SK-N-SH (cell line): ENCODE measurements at regions of chr17 and their contacts with region 1.

Region 1: GRCh38 chr17:67491009-67491680 is 114.1 kb downstream of the PITPNC1 start:
- DNase-seq: peak; percentile 89
- H3K4me3 ChIP-seq: peak overlapping the region; percentile 35 to 44
- H3K27ac ChIP-seq: peak overlapping the region; percentile 84 to 92
- H3K4me1 ChIP-seq: peaks cover 12 to 35% of the 10 kb centered on the region in 2 experiments
- H3K27me3 ChIP-seq: no peaks in the 10 kb centered on the region
- CTCF ChIP-seq: no peak
- EP300 ChIP-seq: peak; percentile 80 to 97; a peak in 3 of 4 replicates
- RAD21 ChIP-seq: peak; percentile 33

Region 2: GRCh38 chr17:67366193-67367157 is 124.7 kb before region 1 on chr17 and contains the start of gene PSMD12:
- CTCF ChIA-PET with region 1: no interaction called
- POLR2A ChIA-PET with region 1: no interaction called
- DNase-seq: peak; percentile 100
- H3K4me3 ChIP-seq: peak within 1 kb of the TSS; percentile 83 to 85
- H3K27ac ChIP-seq: peak within 1 kb of the TSS; percentile 87 to 90
- H3K4me1 ChIP-seq: peaks cover 14 to 18% of the 10 kb centered on the region in 2 experiments
- H3K27me3 ChIP-seq: no peaks in the 10 kb centered on the region
- CTCF ChIP-seq: no peak; the same call in 1 of the 2 replicates
- EP300 ChIP-seq: no peak; a peak in 1 of 4 replicates
- RAD21 ChIP-seq: 0 out of 2 replicates have a peak, but pooled peaks have one; percentile 22
- polyA plus RNA-seq, gene PSMD12: 29.1 and 31.4 TPM in 2 replicates

Region 3: GRCh38 chr17:67421869-67422273 is 69.3 kb before region 1 on chr17:
- CTCF ChIA-PET with region 1: no interaction called
- POLR2A ChIA-PET with region 1: no interaction called
- DNase-seq: no peak
- H3K4me3 ChIP-seq: no peak overlapping the region
- H3K27ac ChIP-seq: peak overlapping the region in 1 of 2 experiments; percentile 89; a peak in 2 of 4 replicates
- H3K4me1 ChIP-seq: peaks cover 2 to 16% of the 10 kb centered on the region in 2 experiments; a peak in 2 of 4 replicates
- H3K27me3 ChIP-seq: no peaks in the 10 kb centered on the region
- CTCF ChIP-seq: no peak
- EP300 ChIP-seq: peak in 1 of 2 experiments; percentile 96; a peak in 2 of 4 replicates
- RAD21 ChIP-seq: no peak

Region 4: DNA sequence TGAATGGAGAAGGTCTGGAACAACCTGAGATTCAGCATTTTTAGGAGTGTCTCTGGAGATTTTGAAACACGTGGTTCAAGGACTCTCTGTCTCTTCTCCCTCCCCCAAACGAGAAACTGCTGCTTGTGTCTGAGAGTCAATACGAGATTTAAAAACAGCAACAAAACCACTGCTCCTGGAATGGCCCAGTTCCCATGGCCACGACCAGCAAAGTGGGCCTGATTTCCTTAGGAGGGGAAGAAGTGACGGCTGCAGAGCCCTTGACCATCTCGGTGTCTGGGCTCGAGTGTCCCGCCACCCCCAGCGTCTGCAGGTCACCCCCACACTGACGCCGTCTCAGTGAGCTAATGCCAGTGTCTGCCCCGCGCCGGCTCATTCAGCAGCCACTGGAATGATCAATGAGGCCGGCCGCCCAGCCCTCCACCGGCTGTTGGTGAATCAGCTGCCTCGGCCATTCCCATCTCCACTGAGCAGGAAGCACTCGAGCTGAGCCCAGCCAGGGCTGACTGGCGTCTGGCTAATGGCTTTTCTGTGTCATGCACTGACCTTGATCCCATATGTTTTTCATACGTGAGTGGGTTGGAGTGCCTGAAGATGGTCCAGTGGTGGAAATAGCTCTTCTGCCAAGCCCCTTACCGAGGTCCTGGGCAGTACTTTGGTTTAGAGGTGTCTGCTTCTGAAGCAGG is 37.7 kb after region 1 on chr17:
- CTCF ChIA-PET with region 1: interaction called, 11 read pairs
- POLR2A ChIA-PET with region 1: interaction called, 10 read pairs
- DNase-seq: peak; percentile 94
- H3K4me3 ChIP-seq: peak overlapping the region; percentile 33 to 48
- H3K27ac ChIP-seq: peak overlapping the region; percentile 93 to 95
- H3K4me1 ChIP-seq: peaks cover 6 to 32% of the 10 kb centered on the region in 2 experiments; a peak in 2 of 4 replicates
- H3K27me3 ChIP-seq: no peaks in the 10 kb centered on the region
- CTCF ChIP-seq: no peak
- EP300 ChIP-seq: peak; percentile 64 to 68
- RAD21 ChIP-seq: peak; percentile 37; the same call in 1 of the 2 replicates